SK-N-SH (cell line): ENCODE measurements at regions of chr1 and their contacts with region 1.

Region 1: DNA sequence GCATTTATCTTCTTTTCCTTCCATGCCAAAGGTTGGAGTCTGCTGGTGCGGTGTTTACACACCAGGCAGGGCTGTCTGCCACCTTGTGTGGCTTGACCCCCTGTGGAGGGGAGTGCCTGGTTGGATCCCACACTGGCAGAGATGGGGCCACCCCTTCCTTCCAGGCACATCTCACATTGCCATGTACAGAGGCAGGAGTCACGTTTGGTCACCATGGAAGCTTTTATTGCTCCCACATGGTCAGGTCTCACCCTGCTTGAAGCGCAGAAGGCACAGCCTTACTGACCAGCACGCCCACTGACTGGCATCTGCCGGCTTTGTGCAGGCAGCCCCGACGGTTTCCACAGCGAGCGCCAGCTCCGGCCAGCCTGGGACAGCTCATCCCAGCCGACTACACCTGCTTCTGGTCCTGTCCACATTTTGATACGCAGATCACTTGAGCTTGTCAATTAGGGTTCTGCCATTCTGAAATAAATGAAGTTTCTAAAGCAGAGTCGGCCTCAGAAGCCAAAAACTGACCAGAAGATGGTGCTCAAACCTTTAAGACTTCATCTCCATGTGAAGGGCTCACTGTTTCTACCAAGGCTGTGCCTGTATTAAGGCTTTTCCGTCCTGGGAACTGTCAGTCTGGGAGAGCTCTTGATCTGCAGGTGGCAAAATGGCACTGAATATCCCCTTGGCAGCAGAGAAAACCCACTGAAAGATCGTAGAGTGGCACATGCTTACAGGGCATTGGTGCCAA is 35.6 kb upstream of the EPHA8 start:
- DNase-seq: peak; percentile 71
- H3K4me3 ChIP-seq: no peak overlapping the region; a peak in 1 of 4 replicates
- H3K27ac ChIP-seq: peak overlapping the region in 1 of 2 experiments; percentile 76; a peak in 2 of 4 replicates
- H3K4me1 ChIP-seq: peaks cover 0 to 35% of the 10 kb centered on the region in 2 experiments; a peak in 1 of 4 replicates
- H3K27me3 ChIP-seq: no peaks in the 10 kb centered on the region
- CTCF ChIP-seq: peak; percentile 27
- EP300 ChIP-seq: no peak; a peak in 1 of 4 replicates
- RAD21 ChIP-seq: peak; percentile 83

Region 2: DNA sequence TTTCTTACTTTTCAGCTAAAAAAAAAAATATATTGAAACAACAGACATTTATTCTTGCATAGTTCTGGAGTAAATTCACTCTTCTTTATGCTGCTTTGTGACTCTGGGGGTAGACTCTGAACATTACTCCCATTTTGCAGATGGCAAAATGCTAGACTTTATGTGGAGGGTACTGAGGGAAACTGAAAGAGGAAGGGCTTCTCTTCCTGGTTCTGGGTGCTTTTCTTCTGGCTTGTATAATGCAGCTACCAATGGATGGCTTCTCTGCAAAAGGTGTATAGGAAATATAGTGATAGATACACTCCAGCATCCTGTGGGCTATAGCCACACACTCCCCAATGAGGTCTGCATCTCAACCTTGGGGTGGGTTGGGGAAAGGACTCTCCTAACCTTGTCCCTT is 95.8 kb before region 1 on chr1:
- CTCF ChIA-PET with region 1: interaction called, 10 read pairs
- POLR2A ChIA-PET with region 1: no interaction called
- DNase-seq: no peak
- H3K4me3 ChIP-seq: no peak overlapping the region
- H3K27ac ChIP-seq: no peak overlapping the region
- H3K4me1 ChIP-seq: no peaks in the 10 kb centered on the region
- H3K27me3 ChIP-seq: 0 out of 2 replicates have a peak, but pooled peaks cover 5% of the 10 kb centered on the region
- CTCF ChIP-seq: no peak
- EP300 ChIP-seq: no peak
- RAD21 ChIP-seq: no peak

Region 3: DNA sequence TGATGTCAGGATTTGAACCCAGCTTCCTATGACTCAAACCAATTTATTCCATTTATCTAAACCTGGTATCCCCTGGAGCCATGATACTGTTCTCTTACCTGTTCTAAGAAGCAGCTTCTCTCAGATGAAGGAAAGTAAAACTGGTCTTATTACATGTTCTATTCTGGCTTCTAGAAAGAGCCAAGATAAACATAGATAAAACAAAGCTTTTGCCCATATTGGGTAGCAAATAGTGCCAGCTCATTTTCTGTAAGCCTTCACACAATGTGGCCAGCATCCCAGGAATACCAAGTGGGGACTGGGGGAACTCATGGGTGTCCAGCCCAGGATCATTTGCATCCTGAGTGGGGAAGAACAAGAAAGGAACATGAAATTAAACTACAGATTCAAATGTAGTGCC is 17.9 kb before region 1 on chr1:
- CTCF ChIA-PET with region 1: interaction called, 28 read pairs
- POLR2A ChIA-PET with region 1: no interaction called
- DNase-seq: no peak
- H3K4me3 ChIP-seq: no peak overlapping the region
- H3K27ac ChIP-seq: no peak overlapping the region
- H3K4me1 ChIP-seq: peaks cover 0 to 18% of the 10 kb centered on the region in 2 experiments; a peak in 2 of 4 replicates
- H3K27me3 ChIP-seq: no peaks in the 10 kb centered on the region
- CTCF ChIP-seq: no peak
- EP300 ChIP-seq: no peak
- RAD21 ChIP-seq: no peak

Region 4: GRCh38 chr1:22572818-22573217 is 45.1 kb after region 1 on chr1:
- CTCF ChIA-PET with region 1: interaction called, 15 read pairs
- POLR2A ChIA-PET with region 1: interaction called, 7 read pairs
- DNase-seq: peak; percentile 96
- H3K4me3 ChIP-seq: no peak overlapping the region; a peak in 1 of 4 replicates
- H3K27ac ChIP-seq: peak overlapping the region in 1 of 2 experiments; percentile 96; a peak in 2 of 4 replicates
- H3K4me1 ChIP-seq: peaks cover 0 to 47% of the 10 kb centered on the region in 2 experiments; a peak in 2 of 4 replicates
- H3K27me3 ChIP-seq: peaks cover 26% of the 10 kb centered on the region
- CTCF ChIP-seq: no peak
- EP300 ChIP-seq: peak in 1 of 2 experiments; percentile 88; a peak in 2 of 4 replicates
- RAD21 ChIP-seq: peak; percentile 25

Region 5: GRCh38 chr1:22619252-22619651 is 91.5 kb after region 1 on chr1:
- CTCF ChIA-PET with region 1: interaction called, 13 read pairs
- POLR2A ChIA-PET with region 1: no interaction called
- DNase-seq: no peak
- H3K4me3 ChIP-seq: no peak overlapping the region
- H3K27ac ChIP-seq: no peak overlapping the region
- H3K4me1 ChIP-seq: peaks cover 0 to 9% of the 10 kb centered on the region in 2 experiments; a peak in 1 of 4 replicates
- H3K27me3 ChIP-seq: peaks cover 19% of the 10 kb centered on the region
- CTCF ChIP-seq: no peak
- EP300 ChIP-seq: no peak
- RAD21 ChIP-seq: no peak

Region 6: DNA sequence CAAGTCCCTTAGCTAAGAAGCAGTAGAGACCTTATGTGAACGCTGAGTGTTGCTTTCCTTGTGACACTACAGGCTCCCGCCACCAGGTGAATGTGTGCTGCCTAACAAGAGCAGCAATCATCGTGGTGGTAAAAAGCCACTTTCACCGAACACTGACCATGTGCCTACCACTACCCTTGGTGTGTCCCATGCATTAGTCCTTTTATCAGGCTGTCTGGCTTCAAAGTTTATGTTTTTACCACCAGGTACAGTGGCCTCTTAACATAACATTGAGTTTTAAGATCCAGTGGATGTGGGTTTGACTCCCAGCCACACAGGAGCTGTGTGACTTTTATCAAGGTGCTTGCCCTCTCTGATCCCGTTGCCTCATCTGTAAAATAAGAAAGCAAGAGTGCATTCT is 127.0 kb after region 1 on chr1:
- CTCF ChIA-PET with region 1: interaction called, 19 read pairs
- POLR2A ChIA-PET with region 1: no interaction called
- DNase-seq: no peak
- H3K4me3 ChIP-seq: no peak overlapping the region
- H3K27ac ChIP-seq: no peak overlapping the region
- H3K4me1 ChIP-seq: peaks cover 0 to 10% of the 10 kb centered on the region in 2 experiments; a peak in 1 of 4 replicates
- H3K27me3 ChIP-seq: peaks cover 21% of the 10 kb centered on the region
- CTCF ChIP-seq: no peak; the same call in 1 of the 2 replicates
- EP300 ChIP-seq: no peak
- RAD21 ChIP-seq: no peak